Ascending aorta (tissue), 2 donors: ENCODE measurements at regions of chr3 and their contacts with region 1.

Region 1: DNA sequence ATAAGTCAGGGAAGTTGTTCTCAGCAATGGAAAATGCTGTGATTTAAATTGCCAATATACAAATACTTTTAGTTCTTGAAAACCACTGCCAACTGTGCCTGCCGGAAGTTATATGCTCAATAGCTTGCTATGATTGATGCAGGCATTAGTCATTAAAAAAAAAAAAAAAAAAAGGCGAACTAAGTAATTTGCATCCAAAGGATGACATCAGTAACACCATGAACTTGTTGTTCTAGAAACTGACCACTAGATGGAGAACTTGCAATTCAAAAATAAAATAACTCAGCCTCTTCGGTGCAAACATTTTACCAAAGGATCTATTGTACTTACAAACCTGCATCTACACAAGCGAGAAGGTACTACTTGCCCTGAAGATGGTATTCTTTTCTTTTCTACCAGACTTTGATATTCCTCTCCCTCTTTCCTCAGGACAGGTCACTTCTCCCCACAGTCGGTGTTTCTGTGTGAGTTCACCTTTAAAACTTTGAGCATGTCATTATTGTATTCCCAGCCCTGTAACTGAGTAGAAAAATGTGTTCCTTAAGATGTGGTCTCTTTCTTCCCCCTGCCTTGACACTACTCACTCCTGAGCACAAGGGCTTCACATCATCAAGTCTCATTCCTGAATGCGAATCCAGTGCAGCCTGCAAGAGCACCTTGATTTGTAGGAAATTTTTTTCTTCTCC is 115.0 kb upstream of the VEPH1 start:
- DNase-seq: no peak
- H3K4me3 ChIP-seq: no peak overlapping the region
- H3K27ac ChIP-seq: no peak overlapping the region
- H3K4me1 ChIP-seq: no peaks in the 10 kb centered on the region
- H3K27me3 ChIP-seq: no peaks in the 10 kb centered on the region
- CTCF ChIP-seq: peak; percentile 56 to 69 (median 58)

Region 2: DNA sequence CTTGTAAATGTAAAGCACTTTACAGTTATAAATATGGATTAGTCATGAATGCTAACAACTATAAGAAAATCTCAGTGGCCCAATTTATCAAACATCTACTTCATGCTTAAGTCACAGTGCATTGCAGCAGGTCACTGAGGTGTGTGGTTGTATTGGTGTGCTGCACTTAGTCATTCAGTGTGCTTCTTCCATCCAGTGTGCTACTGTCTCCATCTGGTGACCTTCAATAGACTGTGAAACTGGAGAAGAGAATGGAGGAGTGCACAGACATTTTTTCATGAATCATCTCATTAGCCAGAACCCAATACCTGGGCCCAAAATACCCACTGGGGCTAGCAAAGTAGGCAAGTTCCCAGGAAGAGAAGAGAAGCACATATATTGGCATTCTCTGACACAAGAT is 288.4 kb after region 1 on chr3:
- intact Hi-C with region 1: loop called (anchors 5 kb)
- DNase-seq: no peak
- H3K4me3 ChIP-seq: no peak overlapping the region
- H3K27ac ChIP-seq: no peak overlapping the region
- H3K4me1 ChIP-seq: no peaks in the 10 kb centered on the region
- H3K27me3 ChIP-seq: no peaks in the 10 kb centered on the region
- CTCF ChIP-seq: no peak

Region 3: GRCh38 chr3:158434412-158435038 is 816.3 kb after region 1 on chr3:
- intact Hi-C with region 1: loop called (anchors 1 kb)
- DNase-seq: peak in 1 of 2 donors; percentile 63
- H3K4me3 ChIP-seq: no peak overlapping the region
- H3K27ac ChIP-seq: no peak overlapping the region
- H3K4me1 ChIP-seq: no peaks in the 10 kb centered on the region
- H3K27me3 ChIP-seq: no peaks in the 10 kb centered on the region
- CTCF ChIP-seq: peak; percentile 41 to 67 (median 42)